CD14-positive monocyte (primary cell): ENCODE measurements at regions of chr1 and their contacts with region 1.

Region 1: GRCh38 chr1:26826261-26827105 is at the start of gene ZDHHC18:
- DNase-seq: peak; percentile 29 to 62 (median 61)
- H3K4me3 ChIP-seq: peak within 1 kb of the TSS; percentile 55 to 81 (median 65)
- H3K4me3 Mint-ChIP-seq: peak within 1 kb of the TSS; percentile 91 to 95
- H3K27ac ChIP-seq: peak within 1 kb of the TSS in 1 of 2 donors; percentile 68
- H3K27ac Mint-ChIP-seq: peak within 1 kb of the TSS; percentile 54 to 93 (median 90)
- H3K4me1 ChIP-seq: peaks cover 44 to 60% of the 10 kb centered on the region in 2 donors
- H3K4me1 Mint-ChIP-seq: peaks cover 57% of the 10 kb centered on the region
- H3K27me3 ChIP-seq: no peaks in the 10 kb centered on the region
- H3K27me3 Mint-ChIP-seq: peaks cover 2 to 3% (median 2%) of the 10 kb centered on the region in 3 donors
- CTCF ChIP-seq: peak; percentile 58
- polyA plus RNA-seq, gene ZDHHC18: 3.1 to 46.6 (median 6.0) TPM

Region 2: DNA sequence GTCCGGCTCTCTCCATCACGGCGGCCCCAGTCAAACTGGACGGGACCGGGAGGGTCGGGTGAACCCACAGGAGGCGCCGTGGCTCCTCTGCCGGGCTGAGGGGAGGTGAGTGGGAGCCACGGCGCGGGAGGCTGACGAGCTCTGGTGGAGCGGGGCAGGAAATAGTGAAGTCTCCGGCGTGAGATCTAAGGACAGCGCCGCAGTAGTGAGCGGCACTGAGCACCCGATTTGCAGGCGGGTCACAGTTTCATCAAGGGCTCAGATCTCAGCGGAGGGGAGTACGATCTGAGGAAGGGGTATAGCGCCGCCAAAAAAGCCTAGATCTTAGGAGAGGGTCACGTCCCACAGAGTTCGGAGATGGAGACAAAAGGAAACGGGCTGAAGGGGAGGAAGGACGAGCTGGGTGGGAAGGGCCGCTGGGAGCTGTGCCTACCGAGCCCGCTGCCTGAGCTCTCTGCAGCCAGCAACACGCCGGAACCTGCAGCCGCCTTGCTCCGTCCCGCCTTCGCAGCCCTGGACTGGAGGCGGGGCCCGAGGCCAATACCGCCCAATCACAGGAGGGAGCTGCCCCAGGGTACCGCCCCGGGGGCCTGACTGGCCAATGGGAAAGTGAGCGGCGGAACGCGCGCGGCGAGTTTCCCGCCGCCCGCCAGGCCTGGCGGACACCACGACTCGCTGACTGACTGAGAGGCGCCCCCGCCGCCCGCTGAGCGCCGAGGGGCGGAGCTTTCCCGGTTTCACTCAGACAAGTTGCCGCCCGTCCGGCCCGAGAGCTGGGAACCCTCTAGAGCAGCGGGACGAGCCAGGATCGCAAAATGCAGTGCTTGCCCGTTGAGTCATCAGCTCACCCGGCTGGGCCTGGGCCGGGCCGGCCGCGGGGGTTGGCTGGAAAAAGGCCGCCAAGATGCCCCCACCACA is 38.4 kb after region 1 on chr1:
- intact Hi-C with region 1: loop called in 1 of 2 experiments (anchors 5 kb)
- DNase-seq: peak; percentile 87 to 93 (median 91)
- H3K4me3 ChIP-seq: peak overlapping the region; percentile 58 to 97 (median 81)
- H3K4me3 Mint-ChIP-seq: peak overlapping the region; percentile 93 to 96
- H3K27ac ChIP-seq: peak overlapping the region; percentile 2 to 75
- H3K27ac Mint-ChIP-seq: peak overlapping the region; percentile 63 to 93 (median 81)
- H3K4me1 ChIP-seq: peaks cover 15 to 28% of the 10 kb centered on the region in 2 donors
- H3K4me1 Mint-ChIP-seq: peaks cover 28% of the 10 kb centered on the region
- H3K27me3 ChIP-seq: no peaks in the 10 kb centered on the region
- H3K27me3 Mint-ChIP-seq: peaks cover 5 to 8% (median 6%) of the 10 kb centered on the region in 3 donors
- CTCF ChIP-seq: no peak